PC-9 (cell line): ENCODE measurements at regions of chr17 and their contacts with region 1.

Region 1: DNA sequence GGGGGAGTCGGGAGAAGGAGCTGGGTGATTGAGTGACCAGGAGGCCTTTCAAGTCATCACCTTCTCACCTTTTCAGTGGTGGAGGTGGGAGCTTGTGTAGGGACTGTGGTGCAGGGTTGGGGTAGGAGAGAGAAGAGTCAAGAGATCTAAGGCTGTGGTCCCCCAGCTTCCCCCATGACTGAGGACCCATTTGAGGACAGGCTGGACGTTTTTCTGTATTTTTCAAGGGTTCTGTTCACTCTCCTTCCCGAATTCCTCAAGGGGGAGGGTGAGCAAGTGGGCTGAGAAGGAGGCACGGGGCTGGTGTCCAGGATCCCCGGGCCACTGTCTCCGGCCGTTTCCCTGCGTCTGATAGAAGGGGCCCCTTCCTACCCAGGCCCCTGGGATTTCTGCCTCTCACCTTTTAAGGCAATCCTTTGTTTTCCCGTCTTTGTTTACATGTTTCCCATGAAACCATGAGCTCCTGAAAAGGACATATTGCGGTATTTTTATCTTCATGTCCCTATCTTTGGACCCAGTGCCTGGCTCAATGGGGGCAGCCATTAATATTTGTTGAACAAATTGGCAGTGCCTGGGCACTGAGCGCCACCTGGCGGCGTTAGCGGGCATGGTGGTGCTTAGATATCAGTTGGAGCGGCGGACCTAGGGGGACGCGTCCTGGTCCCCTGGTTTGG is 9.2 kb upstream of the CD300A start:
- DNase-seq: peak in 1 of 2 experiments; percentile 63
- H3K4me3 ChIP-seq: no peak overlapping the region
- H3K27ac ChIP-seq: no peak overlapping the region
- H3K4me1 ChIP-seq: peaks cover 7% of the 10 kb centered on the region; the same call in 1 of the 2 replicates
- H3K27me3 ChIP-seq: peaks cover 30% of the 10 kb centered on the region
- CTCF ChIP-seq: peak; percentile 98

Region 2: GRCh38 chr17:74305865-74306654 is 151.2 kb before region 1 on chr17:
- CTCF ChIA-PET with region 1: no interaction called
- POLR2A ChIA-PET with region 1: no interaction called
- intact Hi-C with region 1: loop called (anchors 10 kb)
- DNase-seq: no peak
- H3K4me3 ChIP-seq: no peak overlapping the region
- H3K27ac ChIP-seq: no peak overlapping the region
- H3K4me1 ChIP-seq: no peaks in the 10 kb centered on the region
- H3K27me3 ChIP-seq: peaks cover 58% of the 10 kb centered on the region
- CTCF ChIP-seq: no peak; the same call in 1 of the 2 replicates

Region 3: DNA sequence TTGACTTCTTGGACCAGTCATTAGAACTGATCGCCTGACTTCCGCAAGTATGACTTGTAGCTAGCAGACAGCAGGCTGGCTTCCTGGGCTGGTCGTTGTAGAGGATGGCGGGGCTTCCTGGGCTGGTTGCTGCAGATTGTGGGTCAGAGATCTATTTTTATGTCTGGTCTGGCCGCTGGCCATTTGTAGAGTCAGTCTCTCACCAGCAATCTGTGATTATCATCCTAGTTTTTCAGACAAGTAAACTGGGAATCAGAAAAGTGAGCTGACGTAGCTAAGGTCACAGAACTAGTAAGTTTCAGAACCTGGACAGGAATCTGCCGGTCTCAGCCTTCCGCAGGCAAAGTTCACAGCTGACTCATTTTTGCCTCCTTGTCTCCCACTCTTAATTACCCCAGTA is 70.9 kb before region 1 on chr17:
- CTCF ChIA-PET with region 1: no interaction called
- POLR2A ChIA-PET with region 1: interaction called, 11 read pairs
- intact Hi-C with region 1: no loop called
- DNase-seq: no peak
- H3K4me3 ChIP-seq: no peak overlapping the region
- H3K27ac ChIP-seq: no peak overlapping the region
- H3K4me1 ChIP-seq: 0 out of 2 replicates have a peak, but pooled peaks cover under 1% of the 10 kb centered on the region
- H3K27me3 ChIP-seq: no peaks in the 10 kb centered on the region
- CTCF ChIP-seq: no peak

Region 4: DNA sequence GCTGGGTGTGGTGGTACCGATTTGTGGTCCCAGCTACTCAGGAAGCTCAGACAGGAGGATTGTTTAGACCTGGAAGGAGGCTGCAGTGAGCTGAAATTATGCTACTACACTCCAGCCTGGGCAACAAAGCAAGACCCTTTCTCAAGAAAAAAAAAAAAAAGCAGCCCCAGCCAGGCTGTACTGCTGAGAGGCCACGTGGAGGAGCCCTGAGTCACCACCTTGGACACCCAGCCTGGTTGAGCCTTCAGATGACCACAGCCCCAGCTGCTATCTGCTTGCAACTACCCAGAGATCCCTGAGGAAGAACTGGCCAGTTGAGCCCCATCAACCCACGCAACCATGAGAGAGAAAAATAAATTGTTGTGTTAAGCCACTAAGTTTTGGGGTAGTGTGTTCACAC is 49.0 kb before region 1 on chr17:
- CTCF ChIA-PET with region 1: no interaction called
- POLR2A ChIA-PET with region 1: no interaction called
- intact Hi-C with region 1: loop called (anchors 1 kb)
- DNase-seq: peak; percentile 25 to 36
- H3K4me3 ChIP-seq: no peak overlapping the region
- H3K27ac ChIP-seq: no peak overlapping the region
- H3K4me1 ChIP-seq: no peaks in the 10 kb centered on the region
- H3K27me3 ChIP-seq: no peaks in the 10 kb centered on the region
- CTCF ChIP-seq: 0 out of 2 replicates have a peak, but pooled peaks have one; percentile 32

Region 5: GRCh38 chr17:74493381-74493833 is 36.1 kb after region 1 on chr17:
- CTCF ChIA-PET with region 1: interaction called, 6 read pairs
- POLR2A ChIA-PET with region 1: no interaction called
- intact Hi-C with region 1: loop called (anchors 1 kb)
- DNase-seq: peak; percentile 49 to 68
- H3K4me3 ChIP-seq: no peak overlapping the region
- H3K27ac ChIP-seq: no peak overlapping the region
- H3K4me1 ChIP-seq: no peaks in the 10 kb centered on the region
- H3K27me3 ChIP-seq: peaks cover 56% of the 10 kb centered on the region
- CTCF ChIP-seq: peak; percentile 92